ENCODE measurements at regions of chr13 and their contacts with region 1.

Region 1: GRCh38 chr13:97372936-97373335 is 61.0 kb upstream of the RAP2A start:
- DNase-seq: no peak
- ATAC-seq: no peak

Region 2: DNA sequence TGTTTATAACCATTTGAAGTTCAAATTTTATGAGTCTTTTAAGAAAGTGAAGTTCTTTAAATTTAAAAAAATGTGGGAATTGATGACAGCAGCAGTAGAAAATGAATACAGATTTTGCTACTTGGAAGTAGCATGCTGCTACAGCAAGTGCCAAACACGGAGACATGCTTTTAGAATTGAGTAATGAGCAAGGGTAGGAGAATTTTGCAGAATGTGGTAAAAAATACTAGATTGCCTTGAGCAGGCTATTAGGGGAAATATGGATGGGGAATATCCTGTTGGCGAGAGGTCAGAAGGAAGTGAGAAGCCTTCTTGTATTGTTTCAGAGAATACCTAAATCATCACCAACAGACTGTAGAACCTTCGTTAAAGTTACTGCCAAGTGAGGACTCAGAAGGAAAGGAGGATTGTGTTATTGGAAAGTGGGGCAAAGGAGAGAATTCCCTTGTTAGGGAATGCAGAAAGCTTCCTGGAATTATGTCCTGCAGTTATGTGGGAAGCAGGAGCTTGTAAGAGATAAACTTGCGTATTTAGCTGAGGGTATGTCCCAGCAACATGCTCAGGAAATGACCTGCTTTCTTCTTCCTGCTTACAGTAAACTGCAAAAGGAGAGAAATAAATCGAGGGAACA is 346.3 kb before region 1 on chr13:
- intact Hi-C with region 1: loop called (anchors 10 kb)
- DNase-seq: no peak
- ATAC-seq: no peak